Activated CD8-positive, alpha-beta T cell treated with anti-CD3 and anti-CD28 coated beads for 36 hours (primary cell): ENCODE measurements at regions of chr12 and their contacts with region 1.

Region 1: DNA sequence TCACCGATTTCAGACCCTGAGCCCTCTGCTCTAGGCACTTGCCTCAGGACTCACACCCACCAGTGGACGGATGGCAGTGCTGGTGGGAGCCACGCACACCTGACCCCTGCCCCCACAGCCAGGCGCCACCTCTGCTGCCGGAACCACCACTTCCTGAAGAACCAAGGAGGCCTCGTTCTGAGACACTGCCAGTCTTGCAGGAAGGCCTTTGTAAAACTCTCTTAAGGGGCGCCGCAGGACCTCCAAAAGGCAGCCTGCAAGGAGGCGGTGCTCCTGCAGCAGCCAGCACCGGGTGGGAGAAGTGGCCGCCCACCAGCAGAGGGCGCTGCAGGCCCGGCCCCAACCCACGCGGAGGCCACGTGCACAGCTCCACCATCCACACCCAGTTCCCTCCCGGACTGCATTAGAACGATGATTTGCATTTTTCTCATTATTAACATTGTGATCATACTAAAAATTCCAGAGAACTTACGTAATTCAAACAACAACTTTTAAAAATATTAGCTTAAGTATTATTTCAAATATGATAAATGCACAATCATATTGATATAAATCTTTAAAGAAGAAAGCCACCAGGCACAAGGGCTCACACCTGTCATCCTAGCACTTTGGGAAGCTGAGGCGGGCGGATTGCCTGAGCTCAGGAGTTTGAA is 12.8 kb downstream of the STX2 start:
- DNase-seq: peak; percentile 83
- ATAC-seq: peak; percentile 95
- H3K4me3 Mint-ChIP-seq: no peak overlapping the region
- H3K27ac Mint-ChIP-seq: peak overlapping the region; percentile 48
- H3K4me1 Mint-ChIP-seq: peaks cover 23% of the 10 kb centered on the region
- H3K27me3 Mint-ChIP-seq: no peaks in the 10 kb centered on the region
- CTCF ChIP-seq: peak; percentile 96

Region 2: DNA sequence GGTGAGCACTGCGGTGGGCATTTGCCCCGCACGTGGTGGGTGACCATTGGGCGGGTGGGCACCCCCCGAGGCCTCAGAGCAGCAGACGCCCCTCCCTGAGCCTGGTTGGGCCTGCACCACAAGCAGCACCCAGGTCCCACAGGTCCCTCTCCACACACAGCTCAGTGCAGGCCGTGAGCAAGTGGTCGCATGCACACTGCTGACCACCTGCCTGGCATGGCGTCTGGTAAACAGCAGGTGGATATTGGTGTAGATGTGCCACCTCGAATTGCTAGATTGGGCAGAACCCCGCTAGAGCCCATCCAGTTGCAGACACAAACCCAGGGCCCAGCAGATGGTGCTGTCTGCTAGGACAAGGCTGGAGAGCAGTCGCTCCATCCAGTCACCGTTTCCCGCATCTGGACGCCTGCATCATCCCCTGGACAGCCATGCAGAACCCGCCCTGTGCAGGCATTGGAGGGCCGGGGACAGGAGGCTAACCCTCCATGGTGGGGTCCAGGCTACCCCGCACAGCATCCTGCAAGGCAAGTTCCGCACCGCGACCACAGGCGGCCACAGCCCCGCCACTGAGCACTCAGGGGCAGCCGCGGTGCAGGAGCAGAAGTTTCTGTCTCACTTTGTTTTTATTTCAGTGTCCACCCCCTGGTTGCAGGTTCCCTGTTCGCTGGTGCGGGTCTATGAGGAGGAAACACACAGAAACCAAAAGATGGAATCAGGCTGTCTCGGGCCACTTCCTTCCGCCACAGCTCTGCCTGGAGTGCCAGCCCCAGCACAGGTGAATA is 64.5 kb before region 1 on chr12:
- CTCF ChIA-PET with region 1: interaction called, 20 read pairs
- POLR2A ChIA-PET with region 1: no interaction called
- intact Hi-C with region 1: no loop called
- DNase-seq: peak; percentile 76
- ATAC-seq: peak; percentile 49
- H3K4me3 Mint-ChIP-seq: peak overlapping the region; percentile 9
- H3K27ac Mint-ChIP-seq: no peak overlapping the region
- H3K4me1 Mint-ChIP-seq: peaks cover 7% of the 10 kb centered on the region
- H3K27me3 Mint-ChIP-seq: peaks cover 3% of the 10 kb centered on the region
- CTCF ChIP-seq: peak; percentile 68

Region 3: DNA sequence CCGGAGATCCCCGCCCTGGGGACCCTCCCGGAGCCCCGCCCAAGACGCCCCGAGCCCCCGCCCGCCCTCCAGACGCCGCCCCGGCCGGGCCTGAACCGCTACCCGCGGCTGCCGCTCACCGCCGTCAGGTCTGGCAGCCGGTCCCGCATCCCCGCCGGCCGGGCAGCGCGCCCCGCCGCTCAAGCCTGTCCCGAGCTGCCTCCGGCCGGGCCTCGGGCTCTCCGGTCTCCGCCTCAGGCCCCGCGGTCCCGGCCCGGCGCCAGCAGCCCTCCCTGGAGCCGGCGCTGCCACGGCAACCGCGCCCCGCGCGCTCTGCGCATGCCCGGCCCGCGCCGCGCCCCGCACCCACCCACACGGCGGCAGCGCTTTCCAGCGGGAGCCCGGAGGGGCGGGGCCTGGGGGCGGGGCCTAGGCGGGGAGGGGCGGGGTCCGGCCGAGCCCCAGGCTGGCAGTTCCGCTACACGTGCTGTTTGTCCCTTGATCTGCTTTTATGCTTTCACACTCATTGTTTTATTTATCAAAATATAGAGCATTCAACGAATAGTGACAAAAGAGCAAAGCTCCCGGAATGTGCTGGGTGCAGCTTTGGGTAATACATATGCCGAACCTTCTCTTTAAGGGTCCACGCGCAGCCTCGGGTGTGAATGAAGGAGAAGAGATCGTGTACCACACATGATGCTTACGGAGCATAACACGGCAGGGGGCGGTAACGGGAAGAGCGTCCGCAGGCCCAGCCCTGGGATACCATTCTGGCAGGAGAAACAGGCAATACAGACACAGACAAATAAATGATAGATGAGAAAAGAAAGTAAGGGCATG is 12.9 kb after region 1 on chr12 and contains the start of gene STX2:
- CTCF ChIA-PET with region 1: interaction called, 38 read pairs
- POLR2A ChIA-PET with region 1: interaction called, 4 read pairs
- intact Hi-C with region 1: no loop called
- DNase-seq: peak; percentile 83
- ATAC-seq: peak; percentile 94
- H3K4me3 Mint-ChIP-seq: peak within 1 kb of the TSS; percentile 80
- H3K27ac Mint-ChIP-seq: peak within 1 kb of the TSS; percentile 65
- H3K4me1 Mint-ChIP-seq: peaks cover 30% of the 10 kb centered on the region
- H3K27me3 Mint-ChIP-seq: no peaks in the 10 kb centered on the region
- CTCF ChIP-seq: no peak
- total RNA-seq, gene STX2: 11.8 to 12.4 TPM

Region 4: DNA sequence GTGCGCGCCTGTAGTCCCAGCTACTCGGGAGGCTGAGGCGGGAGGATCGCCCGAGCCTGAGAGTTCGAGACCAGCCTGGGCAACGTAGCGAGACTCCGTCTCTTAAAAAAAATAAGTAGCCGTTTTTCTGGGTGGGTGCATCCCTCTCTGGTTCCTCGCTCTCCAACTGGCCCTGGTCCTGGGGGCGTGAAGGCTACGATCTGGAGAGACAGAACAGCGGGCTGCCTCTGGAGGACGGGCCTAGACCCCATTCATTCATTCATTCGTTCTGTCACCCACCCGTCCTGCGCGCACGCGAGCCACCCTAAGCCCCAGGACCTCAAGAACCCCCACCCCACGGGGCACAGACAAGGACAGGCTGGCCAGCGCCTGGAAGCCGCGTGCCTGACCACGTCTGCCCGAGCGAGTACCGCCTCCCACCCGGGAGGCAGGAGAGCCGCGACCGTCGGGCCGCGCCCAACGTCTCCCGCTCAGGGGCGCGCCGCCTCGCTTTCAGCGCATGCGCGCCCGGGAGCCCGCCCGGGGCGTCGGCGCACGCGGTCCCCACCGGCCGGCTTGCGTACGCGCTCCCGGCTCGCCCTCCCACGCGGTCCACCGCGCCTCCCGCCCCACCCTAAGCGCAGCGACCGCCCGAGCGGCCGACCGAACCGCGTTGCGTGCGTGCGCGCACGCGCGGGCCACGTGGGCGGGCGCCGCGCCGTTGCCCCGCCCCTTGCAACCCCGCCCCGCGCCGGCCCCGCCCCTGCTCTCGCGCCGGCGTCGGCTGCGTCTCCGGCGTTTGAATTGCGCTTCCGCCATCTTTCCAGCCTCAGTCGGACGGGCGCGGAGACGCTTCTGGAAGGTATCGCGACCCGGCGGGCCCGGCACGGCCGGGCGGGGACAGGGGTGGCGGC is 45.3 kb after region 1 on chr12 and contains the start of gene RAN:
- CTCF ChIA-PET with region 1: interaction called, 21 read pairs
- POLR2A ChIA-PET with region 1: interaction called, 7 read pairs
- intact Hi-C with region 1: no loop called
- DNase-seq: peak; percentile 92
- ATAC-seq: peak; percentile 72
- H3K4me3 Mint-ChIP-seq: peak within 1 kb of the TSS; percentile 98
- H3K27ac Mint-ChIP-seq: peak within 1 kb of the TSS; percentile 100
- H3K4me1 Mint-ChIP-seq: peaks cover 47% of the 10 kb centered on the region
- H3K27me3 Mint-ChIP-seq: no peaks in the 10 kb centered on the region
- CTCF ChIP-seq: no peak
- total RNA-seq, gene RAN: 2,177 to 2,247 TPM

Region 5: DNA sequence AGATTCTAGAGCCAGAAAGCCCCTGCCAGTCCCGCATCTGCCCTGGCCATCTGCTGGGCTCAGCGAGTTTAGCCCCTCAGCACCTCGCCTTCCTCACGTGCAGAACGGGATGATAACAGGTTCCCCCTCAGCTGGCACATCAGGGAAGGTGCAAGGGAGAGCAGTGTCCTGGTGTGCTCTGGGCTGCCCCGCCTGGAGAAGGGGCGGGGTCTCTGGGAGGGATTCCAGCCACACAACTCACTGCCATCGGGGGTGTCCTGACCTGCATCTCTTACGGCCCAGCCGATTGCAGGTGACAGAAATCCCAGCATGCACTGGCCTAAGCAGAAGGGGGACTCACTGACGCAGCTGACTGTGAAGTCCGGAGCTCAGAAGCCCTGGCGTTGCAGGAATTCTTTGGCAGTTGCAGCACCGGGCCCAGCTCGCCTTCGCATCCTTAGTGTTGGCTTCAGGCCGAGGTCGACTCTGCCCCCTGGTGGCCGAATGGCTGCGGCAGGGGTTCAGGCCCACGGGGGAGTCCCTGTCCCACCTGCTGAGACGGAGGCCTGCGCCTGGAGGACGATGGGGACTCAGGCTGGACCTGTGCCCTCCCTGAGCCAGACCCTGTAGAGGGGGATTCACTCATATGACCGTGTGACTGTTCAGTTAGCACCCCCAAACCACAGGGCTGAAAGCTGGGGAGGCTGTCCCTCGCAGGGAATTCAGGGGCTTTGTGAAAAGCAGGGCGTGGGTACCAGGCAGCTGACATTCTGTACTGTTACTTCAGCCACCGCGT is 306.0 kb after region 1 on chr12:
- CTCF ChIA-PET with region 1: interaction called, 11 read pairs
- POLR2A ChIA-PET with region 1: no interaction called
- intact Hi-C with region 1: no loop called
- DNase-seq: peak; percentile 85
- ATAC-seq: peak; percentile 87
- H3K4me3 Mint-ChIP-seq: no peak overlapping the region
- H3K27ac Mint-ChIP-seq: no peak overlapping the region
- H3K4me1 Mint-ChIP-seq: peaks cover 2% of the 10 kb centered on the region
- H3K27me3 Mint-ChIP-seq: no peaks in the 10 kb centered on the region
- CTCF ChIP-seq: peak; percentile 84